ENCODE measurements at regions of chr5 and their contacts with region 1.

Region 1: GRCh38 chr5:81105261-81105877 is 127.8 kb upstream of the CKMT2 start:
- DNase-seq: no peak
- H3K4me3 ChIP-seq: no peak overlapping the region
- H3K4me3 Mint-ChIP-seq: peak overlapping the region in 3 of 8 donors; percentile 11 to 31 (median 26)
- H3K27ac ChIP-seq: no peak overlapping the region
- H3K27ac Mint-ChIP-seq: peak overlapping the region; percentile 24 to 72 (median 38)
- H3K4me1 ChIP-seq: peaks cover 18% of the 10 kb centered on the region
- H3K4me1 Mint-ChIP-seq: peaks cover 19 to 23% (median 21%) of the 10 kb centered on the region in 4 donors
- H3K27me3 ChIP-seq: no peaks in the 10 kb centered on the region
- H3K27me3 Mint-ChIP-seq: no peaks in the 10 kb centered on the region

Region 2: DNA sequence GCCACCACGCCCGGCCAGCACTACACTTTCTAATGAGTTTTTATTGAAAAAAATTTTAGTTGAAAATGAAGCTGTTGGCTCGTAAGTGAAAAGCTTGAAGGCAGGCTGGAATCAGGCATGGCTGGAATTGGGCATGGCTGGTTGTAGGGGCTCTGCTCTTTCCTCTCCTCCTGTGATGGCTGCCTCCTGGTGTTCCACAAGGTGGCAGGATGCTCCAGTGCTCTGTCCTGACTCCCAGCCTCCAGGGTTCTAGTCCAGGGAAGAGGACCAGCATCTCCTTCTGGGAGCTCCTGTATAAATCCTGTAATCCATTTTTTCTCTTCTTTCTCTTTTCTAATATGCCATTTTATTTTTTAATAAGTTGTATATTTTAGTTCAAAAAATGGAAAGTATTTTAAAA is 393.4 kb before region 1 on chr5:
- CTCF ChIA-PET with region 1: interaction called, 10 read pairs
- POLR2A ChIA-PET with region 1: no interaction called
- intact Hi-C with region 1: loop called (anchors 10 kb)
- DNase-seq: no peak
- H3K4me3 ChIP-seq: no peak overlapping the region
- H3K4me3 Mint-ChIP-seq: no peak overlapping the region
- H3K27ac ChIP-seq: no peak overlapping the region
- H3K27ac Mint-ChIP-seq: peak overlapping the region in 3 of 7 donors; percentile 12 to 64 (median 42)
- H3K4me1 ChIP-seq: no peaks in the 10 kb centered on the region
- H3K4me1 Mint-ChIP-seq: peaks cover 9 to 25% (median 19%) of the 10 kb centered on the region in 4 donors
- H3K27me3 ChIP-seq: no peaks in the 10 kb centered on the region
- H3K27me3 Mint-ChIP-seq: no peaks in the 10 kb centered on the region

Region 3: DNA sequence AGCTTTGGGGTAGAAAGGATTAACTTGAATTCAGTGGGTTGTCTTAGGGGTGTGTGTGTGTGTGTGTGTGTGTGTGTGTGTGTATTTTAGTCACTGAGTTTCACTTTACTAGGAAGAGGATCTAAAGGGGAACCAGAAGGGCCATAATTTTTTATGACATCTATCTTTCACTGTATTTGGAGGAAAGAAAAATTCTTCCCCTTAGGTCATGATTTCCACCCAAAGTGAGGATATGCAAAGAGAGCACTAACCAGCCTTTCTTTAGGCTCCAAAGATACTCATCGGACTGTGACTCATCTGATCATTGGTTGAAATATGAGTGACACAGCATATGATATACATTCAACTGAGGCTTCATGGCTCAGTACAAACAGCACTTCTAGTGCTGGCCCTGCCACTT is 220.4 kb before region 1 on chr5:
- CTCF ChIA-PET with region 1: interaction called, 5 read pairs
- POLR2A ChIA-PET with region 1: no interaction called
- intact Hi-C with region 1: loop called (anchors 5 kb)
- DNase-seq: no peak
- H3K4me3 ChIP-seq: no peak overlapping the region
- H3K4me3 Mint-ChIP-seq: no peak overlapping the region
- H3K27ac ChIP-seq: no peak overlapping the region
- H3K27ac Mint-ChIP-seq: peak overlapping the region in 4 of 7 donors; percentile 8 to 80 (median 42)
- H3K4me1 ChIP-seq: no peaks in the 10 kb centered on the region
- H3K4me1 Mint-ChIP-seq: peaks cover 0 to 9% (median 6%) of the 10 kb centered on the region in 4 donors
- H3K27me3 ChIP-seq: no peaks in the 10 kb centered on the region
- H3K27me3 Mint-ChIP-seq: no peaks in the 10 kb centered on the region

Region 4: DNA sequence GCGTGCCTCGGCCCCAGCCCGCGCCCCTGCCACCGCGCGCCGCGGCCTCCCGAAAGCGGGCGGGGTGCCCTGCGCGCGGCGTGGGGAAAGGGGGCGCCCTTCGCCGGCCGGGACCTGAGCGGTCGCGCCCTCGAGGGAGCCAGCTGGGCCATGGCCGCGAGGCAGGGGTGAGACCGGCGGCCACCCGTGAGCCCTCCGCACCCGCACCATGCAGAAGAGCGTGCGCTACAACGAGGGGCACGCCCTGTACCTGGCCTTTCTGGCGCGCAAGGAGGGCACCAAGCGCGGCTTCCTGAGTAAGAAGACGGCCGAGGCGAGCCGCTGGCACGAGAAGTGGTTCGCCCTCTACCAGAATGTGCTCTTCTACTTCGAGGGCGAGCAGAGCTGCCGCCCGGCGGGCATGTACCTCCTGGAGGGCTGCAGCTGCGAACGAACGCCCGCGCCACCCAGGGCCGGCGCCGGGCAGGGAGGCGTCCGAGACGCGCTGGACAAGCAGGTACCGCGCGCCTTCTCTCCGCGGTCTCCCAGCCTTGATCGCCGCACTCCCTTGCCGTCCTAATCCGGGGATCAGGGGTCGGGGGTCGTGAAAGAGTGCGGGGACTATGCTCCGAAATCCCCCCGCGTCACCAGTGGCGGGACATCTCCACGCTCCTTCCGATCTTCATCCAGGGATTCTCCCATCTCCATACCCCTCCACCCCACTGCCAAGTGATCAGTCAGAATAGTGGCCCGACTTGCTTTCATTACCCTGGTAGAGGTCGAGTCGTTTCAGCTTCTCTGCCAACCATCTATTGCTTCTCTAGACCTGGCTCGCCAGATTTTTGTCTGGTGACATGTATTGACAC is 144.6 kb before region 1 on chr5:
- CTCF ChIA-PET with region 1: interaction called, 17 read pairs
- POLR2A ChIA-PET with region 1: interaction called, 8 read pairs
- intact Hi-C with region 1: loop called (anchors 1 kb)
- DNase-seq: peak; percentile 45 to 59 (median 55)
- H3K4me3 ChIP-seq: peak overlapping the region; percentile 84 to 85
- H3K4me3 Mint-ChIP-seq: peak overlapping the region; percentile 87 to 97 (median 94)
- H3K27ac ChIP-seq: peak overlapping the region; percentile 44
- H3K27ac Mint-ChIP-seq: peak overlapping the region; percentile 76 to 94 (median 82)
- H3K4me1 ChIP-seq: peaks cover 52% of the 10 kb centered on the region
- H3K4me1 Mint-ChIP-seq: peaks cover 40 to 64% (median 50%) of the 10 kb centered on the region in 4 donors
- H3K27me3 ChIP-seq: no peaks in the 10 kb centered on the region
- H3K27me3 Mint-ChIP-seq: no peaks in the 10 kb centered on the region

Region 5: GRCh38 chr5:81006947-81007636 is 98.3 kb before region 1 on chr5:
- CTCF ChIA-PET with region 1: interaction called, 13 read pairs
- POLR2A ChIA-PET with region 1: interaction called, 10 read pairs
- intact Hi-C with region 1: no loop called
- DNase-seq: peak; percentile 80 to 84 (median 84)
- H3K4me3 ChIP-seq: peak overlapping the region; percentile 2 to 41
- H3K4me3 Mint-ChIP-seq: peak overlapping the region; percentile 83 to 94 (median 88)
- H3K27ac ChIP-seq: peak overlapping the region; percentile 78
- H3K27ac Mint-ChIP-seq: peak overlapping the region; percentile 89 to 99 (median 94)
- H3K4me1 ChIP-seq: peaks cover 85% of the 10 kb centered on the region
- H3K4me1 Mint-ChIP-seq: peaks cover 56 to 89% (median 70%) of the 10 kb centered on the region in 4 donors
- H3K27me3 ChIP-seq: no peaks in the 10 kb centered on the region
- H3K27me3 Mint-ChIP-seq: no peaks in the 10 kb centered on the region